Activated T-helper 1 cell treated with anti-CD3 and anti-CD28 coated beads, Interleukin-12 subunit alpha, Interleukin-12 subunit beta, Interleukin-2, Interleukin-4 antibody, amounts not matched to agents 30 ng/mL and 10 ng/mL and 1 ng/mL, durations not matched to agents 14 hours and 24 hours and 36 hours (primary cell): ENCODE measurements at regions of chr18 and their contacts with region 1.

Region 1: DNA sequence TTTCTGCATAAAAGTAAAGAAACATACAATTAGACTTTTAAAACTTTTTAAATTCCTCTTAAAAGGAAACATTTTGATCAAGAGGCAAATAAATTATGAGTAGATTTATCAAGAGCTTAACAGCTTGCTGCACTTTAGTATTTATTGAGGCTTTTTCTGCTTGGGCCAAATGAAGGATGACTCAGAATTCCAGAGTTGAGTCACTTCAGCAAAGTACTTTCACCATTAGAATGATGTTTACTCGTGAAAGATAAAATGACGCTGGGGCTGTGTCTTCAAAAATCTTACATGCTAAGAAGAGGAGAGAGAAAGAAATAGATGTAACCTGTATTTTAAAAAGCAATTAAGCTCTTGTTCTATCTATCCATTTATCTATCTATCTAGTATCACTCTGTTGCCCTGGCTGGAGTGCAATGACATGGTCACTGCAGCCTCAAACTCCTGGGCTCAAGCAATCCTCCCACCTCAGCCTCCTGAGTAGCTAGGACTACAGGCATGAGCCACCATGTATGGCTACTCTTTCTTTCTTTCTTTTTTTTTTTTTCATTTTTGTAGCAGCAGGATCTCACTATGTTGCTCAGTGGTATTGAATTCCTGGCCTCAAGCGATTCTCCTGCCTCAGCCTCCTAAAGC is 75.3 kb upstream of the RIOK3 start:
- DNase-seq: no peak
- H3K4me3 Mint-ChIP-seq: no peak overlapping the region
- H3K27ac Mint-ChIP-seq: peak overlapping the region; percentile 72
- H3K4me1 Mint-ChIP-seq: peaks cover 11% of the 10 kb centered on the region
- H3K27me3 Mint-ChIP-seq: peaks cover 7% of the 10 kb centered on the region

Region 2: DNA sequence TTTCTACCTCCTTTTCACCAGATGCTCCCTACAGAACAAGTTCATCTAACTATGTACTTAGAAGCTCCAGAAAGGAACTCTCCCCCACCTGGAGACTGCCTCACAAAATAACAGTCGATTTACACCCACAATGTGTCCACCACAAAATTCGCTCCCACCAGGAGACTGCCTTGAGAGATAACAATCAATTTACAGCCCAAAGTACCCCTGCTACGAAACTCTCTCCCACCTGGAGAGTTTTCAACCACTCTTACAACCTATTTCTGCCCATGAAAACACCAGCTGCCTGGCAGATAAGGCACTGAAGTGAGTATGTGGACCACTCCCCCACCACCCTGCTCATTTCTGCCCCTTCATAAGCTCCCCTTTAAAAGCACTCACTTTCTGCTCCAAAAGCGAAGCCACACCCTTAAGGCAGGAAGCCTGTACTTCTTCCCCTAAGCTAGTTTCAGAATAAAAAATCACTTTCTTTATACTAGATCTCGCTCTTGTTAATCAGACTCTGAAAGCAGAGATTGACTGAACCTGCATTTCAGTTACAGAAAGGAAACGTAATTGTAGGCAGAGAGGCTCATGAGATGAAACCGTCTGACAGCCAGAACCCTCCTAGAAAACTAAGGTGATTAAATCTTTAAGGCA is 539.0 kb before region 1 on chr18:
- intact Hi-C with region 1: loop called (anchors 1 kb)
- DNase-seq: no peak
- H3K4me3 Mint-ChIP-seq: no peak overlapping the region
- H3K27ac Mint-ChIP-seq: no peak overlapping the region
- H3K4me1 Mint-ChIP-seq: no peaks in the 10 kb centered on the region
- H3K27me3 Mint-ChIP-seq: peaks cover 4% of the 10 kb centered on the region

Region 3: GRCh38 chr18:23398401-23398800 is 20.6 kb after region 1 on chr18:
- intact Hi-C with region 1: loop called (anchors 2 kb)
- DNase-seq: no peak
- H3K4me3 Mint-ChIP-seq: no peak overlapping the region
- H3K27ac Mint-ChIP-seq: no peak overlapping the region
- H3K4me1 Mint-ChIP-seq: peaks cover 25% of the 10 kb centered on the region
- H3K27me3 Mint-ChIP-seq: no peaks in the 10 kb centered on the region